Activated CD8-positive, alpha-beta memory T cell treated with anti-CD3 and anti-CD28 coated beads, Interleukin-2, amount 10 ng/mL, durations not matched to agents 7 days and 5 days (primary cell): ENCODE measurements at regions of chr2 and their contacts with region 1.

Region 1: DNA sequence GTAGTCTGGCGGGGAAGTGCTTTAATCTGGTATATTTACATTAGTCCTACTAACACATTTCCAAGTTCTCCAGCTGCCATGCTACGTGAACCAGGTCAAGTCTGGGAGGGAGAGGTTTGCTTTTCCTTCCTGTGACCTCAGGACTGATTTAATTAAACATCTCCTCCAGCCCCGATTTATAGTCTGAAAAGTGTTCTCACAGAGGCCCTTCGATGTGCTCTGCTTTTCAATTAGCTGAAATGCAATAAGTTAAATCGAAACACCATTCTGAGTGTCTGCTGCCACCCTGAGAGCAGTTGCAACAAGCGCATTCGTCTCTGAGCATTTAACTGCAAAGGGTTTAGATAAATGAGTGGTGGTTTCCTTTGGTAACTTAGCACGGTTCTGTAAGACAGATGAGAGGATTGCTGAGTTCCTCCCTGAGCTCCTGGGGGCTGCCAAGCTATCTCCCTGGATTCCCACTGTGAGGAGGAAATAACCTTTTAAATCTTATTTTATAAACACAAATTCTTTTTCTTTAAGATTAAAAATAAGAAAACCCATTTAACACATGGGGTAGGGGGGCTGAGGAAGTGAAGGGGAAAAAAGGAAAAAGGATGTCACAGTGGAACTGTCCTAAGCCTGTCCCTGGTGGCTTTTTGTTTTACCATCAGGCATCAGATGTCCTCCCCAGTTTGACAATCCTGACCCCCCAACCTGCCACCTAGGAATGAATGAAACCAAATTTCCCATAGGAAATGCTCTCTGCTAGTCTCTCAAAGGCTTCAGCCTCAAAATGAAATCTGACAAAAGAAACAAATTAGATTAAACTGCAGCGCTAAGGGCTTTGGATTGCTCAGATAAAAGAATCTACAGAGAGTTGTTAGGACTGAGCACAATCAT is 56.5 kb upstream of the CREB1 start:
- DNase-seq: peak; percentile 62
- ATAC-seq: peak; percentile 71
- H3K4me3 Mint-ChIP-seq: no peak overlapping the region
- H3K27ac Mint-ChIP-seq: no peak overlapping the region
- H3K4me1 Mint-ChIP-seq: peaks cover 12% of the 10 kb centered on the region
- H3K27me3 Mint-ChIP-seq: peaks cover 4% of the 10 kb centered on the region

Region 2: DNA sequence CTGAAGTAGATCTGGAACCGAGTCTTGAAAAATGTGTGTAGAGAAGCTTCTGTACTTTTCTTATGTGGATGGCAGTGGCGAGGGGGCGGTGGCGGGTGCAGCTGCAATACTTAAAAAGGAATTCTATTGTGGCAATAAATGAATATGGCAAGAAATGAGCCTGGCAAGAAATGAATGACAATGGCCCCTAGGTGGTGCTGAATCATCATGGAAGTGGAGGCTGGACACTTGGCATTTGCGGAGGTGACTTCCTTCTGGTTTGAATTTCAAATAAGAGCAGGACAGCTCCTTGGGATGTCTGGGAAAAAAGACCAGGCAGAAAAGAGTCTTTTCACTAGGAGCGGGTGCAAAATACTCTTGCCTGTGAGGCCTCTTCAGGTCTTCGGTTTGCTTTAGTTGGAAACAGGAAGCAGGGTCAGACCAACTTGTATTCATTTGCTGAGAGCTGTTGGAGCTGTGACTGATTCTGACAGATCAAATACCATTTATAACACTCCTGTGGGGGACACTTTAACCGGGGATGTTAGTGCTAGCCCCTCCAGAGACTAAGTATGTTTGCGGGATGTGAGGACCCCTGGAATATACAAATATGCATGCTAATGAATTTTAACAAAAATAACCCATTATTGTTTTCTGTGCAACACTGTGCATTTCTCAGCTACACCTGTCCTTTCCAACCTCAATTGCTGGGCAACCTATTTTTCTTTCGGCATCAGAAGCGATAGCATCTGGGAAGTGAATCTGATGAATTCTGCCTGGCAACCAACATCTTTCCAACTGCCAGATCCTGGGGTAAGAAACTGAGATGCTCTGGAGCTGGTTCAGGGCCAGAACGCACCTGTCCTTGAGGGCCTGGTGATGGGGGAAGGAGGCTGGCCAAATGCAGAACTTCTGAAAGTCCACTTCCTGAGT is 672.5 kb before region 1 on chr2:
- CTCF ChIA-PET with region 1: interaction called, 27 read pairs
- DNase-seq: peak; percentile 60
- ATAC-seq: peak; percentile 70
- H3K4me3 Mint-ChIP-seq: peak overlapping the region; percentile 44
- H3K27ac Mint-ChIP-seq: peak overlapping the region; percentile 52
- H3K4me1 Mint-ChIP-seq: peaks cover 16% of the 10 kb centered on the region
- H3K27me3 Mint-ChIP-seq: no peaks in the 10 kb centered on the region

Region 3: DNA sequence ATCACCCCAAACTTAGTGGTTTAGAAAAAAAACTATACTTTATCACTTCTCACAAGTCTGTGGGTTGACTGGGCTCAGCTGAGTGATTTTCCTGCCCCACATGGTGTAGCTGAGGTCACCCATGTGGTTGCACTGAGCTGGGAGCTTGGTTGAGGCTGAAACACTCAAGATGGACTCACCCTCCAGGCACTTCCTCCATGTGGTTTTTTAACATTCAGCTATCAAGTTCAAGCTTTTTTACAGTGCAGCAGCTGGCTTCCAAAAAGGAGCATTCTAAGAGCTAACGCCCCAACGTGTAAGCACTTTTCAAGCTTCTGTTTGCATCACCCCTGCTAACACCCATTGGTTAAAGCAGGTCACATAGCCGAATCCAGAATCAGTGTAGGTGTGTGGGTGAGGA is 49.4 kb before region 1 on chr2:
- CTCF ChIA-PET with region 1: no interaction called
- DNase-seq: peak; percentile 86
- ATAC-seq: peak; percentile 91
- H3K4me3 Mint-ChIP-seq: no peak overlapping the region
- H3K27ac Mint-ChIP-seq: peak overlapping the region; percentile 46
- H3K4me1 Mint-ChIP-seq: peaks cover 20% of the 10 kb centered on the region
- H3K27me3 Mint-ChIP-seq: peaks cover 33% of the 10 kb centered on the region

Region 4: DNA sequence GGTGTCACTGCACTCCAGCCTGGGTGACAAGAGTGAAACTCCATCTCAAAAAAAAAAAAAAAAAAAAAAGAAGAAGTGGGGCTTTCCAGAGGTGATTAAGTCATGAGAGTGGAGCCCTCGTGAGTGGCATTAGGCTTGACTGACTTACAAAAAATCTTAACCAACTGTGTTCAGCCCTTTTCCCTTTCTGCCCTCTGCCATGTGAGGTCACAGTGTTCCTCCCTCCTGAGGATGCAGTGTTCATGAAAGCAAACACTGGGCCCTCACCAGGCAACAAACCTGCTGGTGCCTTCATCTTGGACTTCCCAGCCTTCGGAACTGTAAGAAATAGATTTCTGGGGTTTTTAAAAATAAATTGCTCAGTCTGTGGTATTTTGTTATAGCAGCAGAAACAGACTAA is 188.9 kb after region 1 on chr2:
- CTCF ChIA-PET with region 1: no interaction called
- DNase-seq: no peak
- ATAC-seq: no peak
- H3K4me3 Mint-ChIP-seq: no peak overlapping the region
- H3K27ac Mint-ChIP-seq: no peak overlapping the region
- H3K4me1 Mint-ChIP-seq: no peaks in the 10 kb centered on the region
- H3K27me3 Mint-ChIP-seq: peaks cover 2% of the 10 kb centered on the region

Region 5: GRCh38 chr2:207974216-207974605 is 500.9 kb after region 1 on chr2:
- CTCF ChIA-PET with region 1: no interaction called
- DNase-seq: no peak
- ATAC-seq: no peak
- H3K4me3 Mint-ChIP-seq: no peak overlapping the region
- H3K27ac Mint-ChIP-seq: no peak overlapping the region
- H3K4me1 Mint-ChIP-seq: no peaks in the 10 kb centered on the region
- H3K27me3 Mint-ChIP-seq: no peaks in the 10 kb centered on the region